GM12878 (cell line): ENCODE measurements at regions of chr13 and their contacts with region 1.

Region 1: GRCh38 chr13:46648166-46648635 is 95.2 kb downstream of the LRCH1 start:
- DNase-seq: no peak
- ATAC-seq: peak; percentile 95
- H3K4me3 ChIP-seq: no peak overlapping the region
- H3K27ac ChIP-seq: no peak overlapping the region
- H3K4me1 ChIP-seq: peaks cover 34% of the 10 kb centered on the region
- H3K27me3 ChIP-seq: no peaks in the 10 kb centered on the region
- CTCF ChIP-seq: no peak
- EP300 ChIP-seq: no peak
- POLR2A ChIP-seq: no peak
- RAD21 ChIP-seq: no peak

Region 2: DNA sequence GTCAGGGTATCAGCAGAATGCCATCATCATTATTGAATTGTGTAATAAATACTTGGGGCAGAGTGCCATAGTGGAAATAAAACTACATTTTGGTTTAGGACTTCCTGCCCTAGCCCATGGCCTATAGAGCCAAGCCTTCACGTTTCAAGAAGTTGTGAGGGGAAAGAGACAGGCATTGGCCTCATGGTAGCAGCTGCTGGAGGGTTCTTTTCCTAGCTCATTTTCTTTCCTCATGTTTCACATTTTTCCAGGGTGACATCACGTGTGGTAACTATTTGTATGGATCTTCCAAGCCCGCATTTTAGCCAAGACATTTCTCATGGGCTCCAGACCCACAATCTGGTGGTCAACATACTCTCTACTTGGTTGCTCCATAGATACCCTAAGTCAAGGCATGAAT is 14.8 kb before region 1 on chr13:
- CTCF ChIA-PET with region 1: interaction called, 3 read pairs
- POLR2A ChIA-PET with region 1: interaction called, 15 read pairs
- RAD21 ChIA-PET with region 1: interaction called, 4 read pairs
- SMC1A ChIA-PET with region 1: interaction called, 456 read pairs
- in situ Hi-C with region 1: no loop called
- intact Hi-C with region 1: no loop called
- DNase-seq: no peak
- ATAC-seq: no peak
- H3K4me3 ChIP-seq: no peak overlapping the region
- H3K27ac ChIP-seq: no peak overlapping the region
- H3K4me1 ChIP-seq: peaks cover 18% of the 10 kb centered on the region
- H3K27me3 ChIP-seq: no peaks in the 10 kb centered on the region
- CTCF ChIP-seq: no peak
- EP300 ChIP-seq: no peak
- POLR2A ChIP-seq: no peak
- RAD21 ChIP-seq: no peak

Region 3: DNA sequence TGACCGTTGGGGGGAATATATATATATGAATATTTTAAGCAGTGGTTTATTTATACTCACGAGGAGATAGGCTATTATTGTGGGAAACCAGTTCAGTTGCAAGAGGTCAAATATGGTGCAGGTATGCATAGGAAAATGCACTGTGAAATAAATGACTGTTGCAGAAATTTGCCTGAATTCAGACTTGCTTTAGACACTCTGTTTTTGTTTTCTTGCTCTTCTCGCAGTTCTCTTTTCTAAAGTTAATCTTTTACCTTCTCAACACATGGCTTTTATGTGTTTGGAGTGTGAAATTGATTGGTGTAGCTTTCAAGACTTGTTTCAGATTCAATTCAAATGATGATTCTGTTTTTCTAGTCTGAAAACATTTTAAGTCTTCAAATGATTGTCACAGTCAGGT is 14.5 kb after region 1 on chr13:
- CTCF ChIA-PET with region 1: interaction called, 14 read pairs
- POLR2A ChIA-PET with region 1: interaction called, 51 read pairs
- RAD21 ChIA-PET with region 1: interaction called, 18 read pairs
- SMC1A ChIA-PET with region 1: interaction called, 456 read pairs
- in situ Hi-C with region 1: no loop called
- intact Hi-C with region 1: no loop called
- DNase-seq: no peak
- ATAC-seq: peak; percentile 70
- H3K4me3 ChIP-seq: no peak overlapping the region
- H3K27ac ChIP-seq: peak overlapping the region; percentile 51; the same call in 1 of the 2 replicates
- H3K4me1 ChIP-seq: peaks cover 47% of the 10 kb centered on the region
- H3K27me3 ChIP-seq: no peaks in the 10 kb centered on the region
- CTCF ChIP-seq: no peak
- EP300 ChIP-seq: peak in 1 of 2 experiments; percentile 59; a peak in 2 of 4 replicates
- POLR2A ChIP-seq: no peak
- RAD21 ChIP-seq: no peak

Region 4: GRCh38 chr13:46668302-46668720 is 20.1 kb after region 1 on chr13:
- CTCF ChIA-PET with region 1: interaction called, 14 read pairs
- POLR2A ChIA-PET with region 1: interaction called, 11 read pairs
- RAD21 ChIA-PET with region 1: interaction called, 13 read pairs
- SMC1A ChIA-PET with region 1: interaction called, 456 read pairs
- in situ Hi-C with region 1: no loop called
- intact Hi-C with region 1: no loop called
- DNase-seq: no peak
- ATAC-seq: peak; percentile 11
- H3K4me3 ChIP-seq: peak overlapping the region; percentile 66
- H3K27ac ChIP-seq: peak overlapping the region; percentile 91
- H3K4me1 ChIP-seq: peaks cover 30% of the 10 kb centered on the region
- H3K27me3 ChIP-seq: no peaks in the 10 kb centered on the region
- CTCF ChIP-seq: no peak
- EP300 ChIP-seq: 0 out of 4 replicates have a peak, but pooled peaks of 1 of the 2 experiments have one; percentile 17
- POLR2A ChIP-seq: no peak
- RAD21 ChIP-seq: no peak